CD4-positive, alpha-beta T cell (primary cell): ENCODE measurements at regions of chr21 and their contacts with region 1.

Region 1: GRCh38 chr21:32143241-32143939 is 135.5 kb downstream of the MIS18A start:
- DNase-seq: no peak
- ATAC-seq: no peak
- H3K4me3 ChIP-seq: no peak overlapping the region
- H3K4me3 Mint-ChIP-seq: no peak overlapping the region
- H3K27ac ChIP-seq: no peak overlapping the region
- H3K27ac Mint-ChIP-seq: no peak overlapping the region
- H3K4me1 ChIP-seq: no peaks in the 10 kb centered on the region
- H3K4me1 Mint-ChIP-seq: no peaks in the 10 kb centered on the region
- H3K27me3 ChIP-seq: peaks cover 0 to 4% of the 10 kb centered on the region in 2 experiments
- H3K27me3 Mint-ChIP-seq: peaks cover 27% of the 10 kb centered on the region
- CTCF ChIP-seq: no peak

Region 2: GRCh38 chr21:33109574-33110339 is 966.4 kb after region 1 on chr21:
- CTCF ChIA-PET with region 1: no interaction called
- POLR2A ChIA-PET with region 1: no interaction called
- intact Hi-C with region 1: loop called in 1 of 2 experiments (anchors 10 kb)
- DNase-seq: peak in 7 of 14 experiments; percentile 8 to 50 (median 34)
- ATAC-seq: peak; percentile 52
- H3K4me3 ChIP-seq: peak overlapping the region; percentile 9
- H3K4me3 Mint-ChIP-seq: peak overlapping the region; percentile 82
- H3K27ac ChIP-seq: no peak overlapping the region
- H3K27ac Mint-ChIP-seq: no peak overlapping the region
- H3K4me1 ChIP-seq: peaks cover 11% of the 10 kb centered on the region
- H3K4me1 Mint-ChIP-seq: peaks cover 30% of the 10 kb centered on the region
- H3K27me3 ChIP-seq: peaks cover 14 to 22% of the 10 kb centered on the region in 2 experiments
- H3K27me3 Mint-ChIP-seq: peaks cover 47% of the 10 kb centered on the region
- CTCF ChIP-seq: no peak